Ascending aorta (tissue), 2 donors: ENCODE measurements at regions of chr15 and their contacts with region 1.

Region 1: GRCh38 chr15:75023181-75023871 is at the start of gene PPCDC:
- DNase-seq: peak; percentile 85 to 98
- H3K4me3 ChIP-seq: peak within 1 kb of the TSS; percentile 81 to 97
- H3K27ac ChIP-seq: peak within 1 kb of the TSS; percentile 78 to 91
- H3K4me1 ChIP-seq: peaks cover 4 to 10% of the 10 kb centered on the region in 2 donors
- H3K27me3 ChIP-seq: no peaks in the 10 kb centered on the region
- CTCF ChIP-seq: no peak
- total RNA-seq, gene PPCDC: 8.9 TPM

Region 2: DNA sequence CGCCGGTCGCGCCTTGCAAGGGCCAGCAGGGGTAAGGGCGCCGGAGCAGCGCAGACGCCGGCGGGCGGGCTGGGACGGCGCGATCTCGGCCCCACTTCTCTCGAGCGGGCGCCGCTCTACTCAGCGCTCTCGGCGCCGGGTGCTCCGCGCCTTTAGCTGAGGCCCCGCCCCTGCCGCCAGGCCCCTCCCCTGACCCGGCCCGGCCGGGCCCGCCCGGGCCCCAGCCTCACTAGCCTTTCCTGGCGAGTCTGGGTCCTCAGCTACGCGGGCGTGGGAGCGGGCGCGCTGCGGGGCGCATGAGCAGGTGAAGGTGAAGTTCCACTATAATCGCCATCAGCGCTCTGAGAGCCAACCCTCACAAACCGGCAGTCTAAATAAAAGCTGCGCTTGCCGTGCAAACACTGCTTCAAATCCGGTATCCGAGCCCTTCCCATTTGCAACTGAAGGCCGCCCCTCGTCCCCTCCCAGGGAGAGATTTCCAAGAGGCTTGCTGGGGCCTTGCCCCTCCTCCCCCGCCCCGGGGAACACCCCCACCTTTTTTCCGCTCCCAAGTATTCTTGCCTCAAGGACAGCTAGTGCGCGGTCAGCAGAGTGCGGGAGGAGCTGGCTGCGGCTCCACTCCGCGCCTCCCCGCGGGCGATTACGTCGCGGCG is 66.6 kb before region 1 on chr15 and contains the start of gene RPP25:
- intact Hi-C with region 1: loop called (anchors 2 kb)
- DNase-seq: peak; percentile 36 to 89
- H3K4me3 ChIP-seq: peak within 1 kb of the TSS; percentile 71 to 84
- H3K27ac ChIP-seq: peak within 1 kb of the TSS; percentile 91 to 94
- H3K4me1 ChIP-seq: peaks cover 7 to 16% of the 10 kb centered on the region in 2 donors
- H3K27me3 ChIP-seq: no peaks in the 10 kb centered on the region
- CTCF ChIP-seq: no peak
- total RNA-seq, gene RPP25: 28.4 TPM

Region 3: GRCh38 chr15:74995241-74995778 is 28.0 kb before region 1 on chr15 and contains the start of gene SCAMP5:
- intact Hi-C with region 1: loop called (anchors 2 kb)
- DNase-seq: peak; percentile 68 to 94
- H3K4me3 ChIP-seq: peak within 1 kb of the TSS; percentile 73 to 79
- H3K27ac ChIP-seq: no peak within 1 kb of the TSS
- H3K4me1 ChIP-seq: peaks cover 5 to 8% of the 10 kb centered on the region in 2 donors
- H3K27me3 ChIP-seq: no peaks in the 10 kb centered on the region
- CTCF ChIP-seq: no peak
- total RNA-seq, gene SCAMP5: 0.43 TPM

Region 4: DNA sequence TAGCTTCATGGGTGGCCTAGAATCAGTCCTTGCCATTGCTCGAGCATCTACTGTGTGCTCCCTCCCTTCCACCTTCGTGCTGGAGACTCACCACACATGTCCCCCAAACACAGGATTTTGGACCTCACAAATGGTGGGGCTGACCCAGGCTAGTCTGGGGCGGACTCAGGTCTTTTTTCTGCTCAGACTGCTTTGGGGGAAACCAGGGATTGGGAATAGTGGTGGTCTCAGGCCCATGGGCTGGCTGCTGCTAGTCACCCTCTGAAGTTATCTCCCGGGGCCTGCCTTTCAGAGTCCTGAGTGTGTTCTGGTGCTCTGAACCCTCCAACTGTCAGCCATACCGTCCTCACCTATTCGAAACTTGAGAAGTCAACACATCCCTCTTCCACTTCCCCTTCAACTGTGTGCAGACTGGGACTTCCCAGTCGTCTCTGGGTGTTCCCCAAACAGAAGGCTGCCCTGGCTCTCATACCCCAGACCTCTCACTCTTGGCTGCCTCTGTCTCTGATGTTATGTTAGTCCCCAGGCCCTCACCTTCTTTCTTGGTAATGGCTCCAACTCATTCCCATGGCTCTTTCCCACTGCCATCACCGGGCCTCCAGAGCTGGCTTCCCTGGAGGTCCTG is 46.1 kb after region 1 on chr15:
- intact Hi-C with region 1: no loop called
- DNase-seq: no peak
- H3K4me3 ChIP-seq: no peak overlapping the region
- H3K27ac ChIP-seq: no peak overlapping the region
- H3K4me1 ChIP-seq: peaks cover 0 to 28% of the 10 kb centered on the region in 2 donors
- H3K27me3 ChIP-seq: no peaks in the 10 kb centered on the region
- CTCF ChIP-seq: no peak

Region 5: GRCh38 chr15:75335705-75336355 is 312.5 kb after region 1 on chr15 and contains the start of gene COMMD4:
- intact Hi-C with region 1: loop called (anchors 10 kb)
- DNase-seq: peak; percentile 71 to 97
- H3K4me3 ChIP-seq: peak within 1 kb of the TSS; percentile 56 to 81
- H3K27ac ChIP-seq: peak within 1 kb of the TSS; percentile 31 to 51
- H3K4me1 ChIP-seq: peaks cover 3 to 5% of the 10 kb centered on the region in 2 donors
- H3K27me3 ChIP-seq: no peaks in the 10 kb centered on the region
- CTCF ChIP-seq: no peak
- total RNA-seq, gene COMMD4: 54.8 TPM

Region 6: DNA sequence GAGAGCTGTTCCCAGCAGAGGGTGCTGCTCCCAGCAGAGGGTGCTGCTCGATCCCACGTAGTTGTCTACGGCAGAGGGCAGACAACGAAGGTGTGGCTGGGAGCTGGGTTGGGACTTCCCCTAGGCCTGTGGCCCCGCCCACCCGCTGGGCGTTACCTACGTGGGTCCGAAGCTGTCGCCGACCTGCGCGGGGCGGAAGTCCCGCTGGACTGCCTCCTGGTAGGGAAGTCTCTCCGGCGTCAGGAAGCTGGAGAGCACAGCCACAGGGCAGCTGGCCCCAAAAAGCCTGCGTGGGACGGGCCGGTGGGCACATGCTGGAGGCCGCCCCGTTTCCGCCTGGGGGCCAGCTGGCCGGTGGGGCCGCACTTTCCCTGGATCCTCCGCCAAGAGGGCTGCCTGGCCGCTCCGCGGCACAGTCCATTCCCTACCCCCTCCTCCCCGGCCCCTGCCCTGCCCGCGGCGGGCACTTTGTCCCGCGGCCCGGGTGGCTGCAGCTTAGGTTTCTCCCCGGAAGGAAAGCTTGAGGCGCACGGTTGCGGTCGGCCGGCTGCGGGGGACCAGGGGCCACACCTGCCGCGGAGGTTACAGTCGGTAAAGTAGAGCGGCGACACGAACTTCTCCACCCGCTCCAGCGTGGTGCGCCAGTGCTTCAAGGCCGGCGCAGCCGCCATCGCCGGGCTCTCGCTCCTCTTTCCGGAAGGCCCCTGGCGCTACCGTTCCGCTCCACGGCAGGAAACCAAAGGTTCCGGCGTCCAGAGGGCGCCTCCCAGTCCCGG is 344.8 kb after region 1 on chr15 and contains the start of gene MAN2C1:
- intact Hi-C with region 1: loop called (anchors 10 kb)
- DNase-seq: peak; percentile 73 to 97
- H3K4me3 ChIP-seq: peak within 1 kb of the TSS; percentile 94 to 98
- H3K27ac ChIP-seq: peak within 1 kb of the TSS; percentile 99
- H3K4me1 ChIP-seq: peaks cover 5 to 8% of the 10 kb centered on the region in 2 donors
- H3K27me3 ChIP-seq: no peaks in the 10 kb centered on the region
- CTCF ChIP-seq: peak; percentile 69 to 82 (median 72)
- total RNA-seq, gene MAN2C1: 447 TPM